Lower lobe of right lung (tissue), 2 donors: ENCODE measurements at regions of chr18 and their contacts with region 1.

Region 1: GRCh38 chr18:1361936-1362335 is 457.3 kb downstream of the ADCYAP1 start:
- DNase-seq: no peak
- ATAC-seq: no peak
- H3K4me3 ChIP-seq: no peak overlapping the region
- H3K27ac ChIP-seq: no peak overlapping the region
- H3K4me1 ChIP-seq: no peaks in the 10 kb centered on the region
- H3K27me3 ChIP-seq: no peaks in the 10 kb centered on the region
- CTCF ChIP-seq: no peak

Region 2: DNA sequence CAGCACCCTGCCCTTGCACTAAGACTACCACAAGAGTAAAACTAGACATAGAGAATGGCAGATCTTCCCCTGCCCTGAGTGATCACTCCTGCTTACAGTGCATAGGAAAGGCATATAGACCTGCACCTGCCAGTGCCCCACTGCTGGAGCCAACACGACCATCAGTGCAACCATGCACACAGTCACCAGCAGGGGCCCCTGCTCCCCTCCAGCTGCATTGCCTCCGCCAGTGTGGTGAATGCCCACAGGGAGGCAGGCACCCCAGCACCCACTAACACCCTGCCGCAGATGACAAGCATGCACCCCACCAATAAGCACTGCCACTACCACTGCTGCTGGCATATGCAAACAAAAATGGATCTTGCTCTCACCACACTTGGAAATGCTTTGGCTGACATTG is 21.5 kb after region 1 on chr18:
- intact Hi-C with region 1: no loop called
- DNase-seq: no peak
- ATAC-seq: peak in 1 of 2 donors; percentile 27
- H3K4me3 ChIP-seq: no peak overlapping the region
- H3K27ac ChIP-seq: no peak overlapping the region
- H3K4me1 ChIP-seq: no peaks in the 10 kb centered on the region
- H3K27me3 ChIP-seq: no peaks in the 10 kb centered on the region
- CTCF ChIP-seq: no peak

Region 3: GRCh38 chr18:1412655-1413322 is 50.9 kb after region 1 on chr18:
- intact Hi-C with region 1: loop called (anchors 10 kb)
- DNase-seq: no peak
- ATAC-seq: no peak
- H3K4me3 ChIP-seq: no peak overlapping the region
- H3K27ac ChIP-seq: no peak overlapping the region
- H3K4me1 ChIP-seq: no peaks in the 10 kb centered on the region
- H3K27me3 ChIP-seq: no peaks in the 10 kb centered on the region
- CTCF ChIP-seq: no peak

Region 4: GRCh38 chr18:1488956-1489355 is 127.0 kb after region 1 on chr18:
- intact Hi-C with region 1: no loop called
- DNase-seq: no peak
- ATAC-seq: no peak
- H3K4me3 ChIP-seq: no peak overlapping the region
- H3K27ac ChIP-seq: no peak overlapping the region
- H3K4me1 ChIP-seq: no peaks in the 10 kb centered on the region
- H3K27me3 ChIP-seq: no peaks in the 10 kb centered on the region
- CTCF ChIP-seq: no peak

Region 5: GRCh38 chr18:2036086-2036485 is 674.1 kb after region 1 on chr18:
- intact Hi-C with region 1: no loop called
- DNase-seq: no peak
- ATAC-seq: no peak
- H3K4me3 ChIP-seq: no peak overlapping the region
- H3K27ac ChIP-seq: no peak overlapping the region
- H3K4me1 ChIP-seq: no peaks in the 10 kb centered on the region
- H3K27me3 ChIP-seq: no peaks in the 10 kb centered on the region
- CTCF ChIP-seq: no peak